SK-N-SH (cell line): ENCODE measurements at regions of chr1 and their contacts with region 1.

Region 1: DNA sequence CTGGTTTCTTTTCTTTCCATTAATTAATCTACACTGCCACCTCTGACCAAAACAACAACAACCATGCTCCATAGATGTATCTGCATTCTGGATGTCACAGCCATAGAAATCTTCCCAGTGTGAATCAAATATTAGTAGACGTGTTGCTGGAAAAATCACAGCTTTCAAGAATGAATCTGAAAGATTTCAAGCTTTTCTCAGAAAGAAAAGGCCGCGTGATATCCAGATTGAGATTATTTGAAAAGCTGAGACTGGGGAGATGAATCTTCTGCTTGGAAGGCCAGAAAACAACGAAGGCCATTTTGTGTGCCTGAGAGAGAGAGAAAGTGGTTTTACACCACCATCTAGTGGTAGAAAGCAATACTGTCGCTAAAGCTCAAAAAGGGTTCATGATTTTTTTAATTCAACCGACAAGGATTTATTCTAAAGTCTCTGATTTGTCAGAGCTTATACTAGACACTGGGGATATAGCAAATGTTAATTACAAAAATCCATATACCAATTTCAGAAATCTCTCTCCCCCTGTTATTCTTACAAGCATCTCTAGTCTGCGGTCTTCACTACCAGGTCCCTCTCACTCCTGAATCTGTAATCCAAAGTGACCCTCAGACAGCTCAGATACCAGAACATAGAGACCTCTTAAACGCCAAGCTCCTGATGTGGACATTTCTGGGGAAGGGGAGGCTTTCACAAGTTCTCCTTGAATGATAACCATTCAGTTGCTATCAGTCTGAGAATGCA is 87.5 kb upstream of the SGIP1 start:
- DNase-seq: peak; percentile 64
- H3K4me3 ChIP-seq: no peak overlapping the region; a peak in 1 of 4 replicates
- H3K27ac ChIP-seq: peak overlapping the region; percentile 21 to 99; a peak in 3 of 4 replicates
- H3K4me1 ChIP-seq: peaks cover 17 to 36% of the 10 kb centered on the region in 2 experiments; a peak in 3 of 4 replicates
- H3K27me3 ChIP-seq: no peaks in the 10 kb centered on the region
- CTCF ChIP-seq: peak; percentile 86
- EP300 ChIP-seq: no peak
- RAD21 ChIP-seq: peak; percentile 98

Region 2: DNA sequence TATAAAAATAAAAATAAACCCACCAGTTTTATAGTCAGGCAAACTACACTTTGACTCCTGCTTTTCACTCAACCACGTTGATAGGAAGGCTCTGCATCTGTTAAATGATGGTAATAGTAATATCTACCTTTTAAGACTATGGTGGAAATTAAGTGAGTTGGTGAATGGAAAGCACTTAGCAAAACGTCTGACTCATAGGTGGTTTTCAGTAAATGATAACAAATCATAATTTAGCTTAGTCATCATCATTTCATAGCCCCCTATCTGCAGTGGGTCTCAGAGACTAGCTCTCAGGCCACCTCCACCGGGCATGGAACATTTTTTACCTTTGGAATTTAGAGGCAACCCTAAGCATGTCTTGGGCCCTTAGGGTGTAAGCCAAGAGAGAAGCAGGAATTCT is 493.7 kb before region 1 on chr1:
- CTCF ChIA-PET with region 1: interaction called, 40 read pairs
- POLR2A ChIA-PET with region 1: no interaction called
- DNase-seq: no peak
- H3K4me3 ChIP-seq: no peak overlapping the region
- H3K27ac ChIP-seq: no peak overlapping the region
- H3K4me1 ChIP-seq: no peaks in the 10 kb centered on the region
- H3K27me3 ChIP-seq: no peaks in the 10 kb centered on the region
- CTCF ChIP-seq: no peak
- EP300 ChIP-seq: no peak
- RAD21 ChIP-seq: no peak

Region 3: DNA sequence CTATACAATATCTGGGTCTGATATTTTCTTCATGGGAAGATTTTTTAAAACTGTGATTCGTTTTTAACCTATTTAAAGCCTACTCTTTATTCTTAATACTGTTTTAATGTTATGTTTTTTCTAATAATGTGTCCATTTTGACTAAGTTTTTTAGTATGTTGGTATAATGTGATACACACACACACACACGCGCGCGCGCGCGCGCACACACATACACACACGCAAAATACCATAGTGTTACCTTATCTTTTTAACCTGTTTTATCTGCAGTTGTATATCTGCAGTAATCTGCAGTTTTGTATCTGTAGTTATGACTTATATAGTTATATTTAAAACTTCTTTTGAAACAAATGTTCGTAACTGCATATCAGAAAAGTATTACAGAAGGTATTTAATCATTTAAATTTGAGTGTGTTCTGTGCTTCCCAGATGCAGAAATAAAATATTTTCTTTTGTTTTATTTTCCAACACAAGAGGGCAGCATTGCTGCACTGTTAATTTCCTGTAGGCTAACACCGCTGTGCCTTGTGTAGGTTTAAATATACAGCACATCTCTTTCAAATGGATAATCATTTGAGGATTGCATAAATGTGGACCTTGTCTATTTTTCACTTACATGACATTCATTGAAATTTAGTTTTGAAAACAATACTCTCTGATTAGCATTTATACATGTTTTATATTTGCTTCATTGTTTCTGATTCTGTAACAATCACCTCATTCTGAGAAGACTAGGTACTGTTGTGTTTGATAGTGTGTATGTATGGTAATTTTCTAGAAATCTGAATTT is 487.7 kb before region 1 on chr1:
- CTCF ChIA-PET with region 1: interaction called, 40 read pairs
- POLR2A ChIA-PET with region 1: no interaction called
- DNase-seq: peak; percentile 46
- H3K4me3 ChIP-seq: no peak overlapping the region
- H3K27ac ChIP-seq: no peak overlapping the region; a peak in 1 of 4 replicates
- H3K4me1 ChIP-seq: peaks cover 0 to 8% of the 10 kb centered on the region in 2 experiments; a peak in 1 of 4 replicates
- H3K27me3 ChIP-seq: no peaks in the 10 kb centered on the region
- CTCF ChIP-seq: peak; percentile 82
- EP300 ChIP-seq: no peak
- RAD21 ChIP-seq: peak; percentile 98

Region 4: GRCh38 chr1:66271216-66271903 is 175.1 kb before region 1 on chr1:
- CTCF ChIA-PET with region 1: interaction called, 12 read pairs
- POLR2A ChIA-PET with region 1: no interaction called
- DNase-seq: peak; percentile 72
- H3K4me3 ChIP-seq: peak overlapping the region in 1 of 2 experiments; percentile 30; a peak in 1 of 4 replicates
- H3K27ac ChIP-seq: peak overlapping the region; percentile 91 to 97
- H3K4me1 ChIP-seq: peaks cover 21 to 45% of the 10 kb centered on the region in 2 experiments; a peak in 3 of 4 replicates
- H3K27me3 ChIP-seq: no peaks in the 10 kb centered on the region
- CTCF ChIP-seq: no peak
- EP300 ChIP-seq: peak; percentile 96
- RAD21 ChIP-seq: peak; percentile 38

Region 5: DNA sequence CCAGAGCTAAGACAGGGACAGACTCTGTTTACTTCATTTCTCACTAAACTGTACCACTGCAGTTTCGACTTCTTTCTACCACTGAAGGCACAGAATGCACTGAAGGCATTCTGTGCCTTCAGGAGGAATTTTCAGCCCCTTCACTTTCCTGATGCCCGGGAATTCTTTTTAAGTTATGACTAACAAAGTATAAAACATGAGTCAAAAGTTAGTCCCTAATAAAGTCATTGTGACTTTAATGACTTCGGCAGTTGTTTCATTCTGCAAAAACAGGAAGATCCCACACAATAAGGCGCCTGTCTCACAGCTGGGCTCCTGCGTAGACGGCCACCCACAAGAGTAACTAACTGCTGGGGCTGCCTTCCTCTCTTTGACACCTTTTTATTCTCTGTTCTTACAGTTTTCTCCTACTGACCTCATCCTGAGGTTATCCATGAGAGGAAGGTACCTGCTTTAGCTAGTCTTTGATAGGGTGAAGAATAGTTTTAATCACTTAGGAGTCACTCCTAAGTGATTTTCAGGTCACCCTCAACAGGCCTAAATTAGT is 96.4 kb before region 1 on chr1:
- CTCF ChIA-PET with region 1: interaction called, 25 read pairs
- POLR2A ChIA-PET with region 1: no interaction called
- DNase-seq: no peak
- H3K4me3 ChIP-seq: peak overlapping the region in 1 of 2 experiments; percentile 20; a peak in 1 of 4 replicates
- H3K27ac ChIP-seq: peak overlapping the region in 1 of 2 experiments; percentile 33; a peak in 1 of 4 replicates
- H3K4me1 ChIP-seq: peaks cover 24 to 43% of the 10 kb centered on the region in 2 experiments; a peak in 3 of 4 replicates
- H3K27me3 ChIP-seq: no peaks in the 10 kb centered on the region
- CTCF ChIP-seq: no peak
- EP300 ChIP-seq: no peak
- RAD21 ChIP-seq: no peak

Region 6: GRCh38 chr1:66490816-66491215 is 44.4 kb after region 1 on chr1:
- CTCF ChIA-PET with region 1: interaction called, 19 read pairs
- POLR2A ChIA-PET with region 1: interaction called, 28 read pairs
- DNase-seq: peak; percentile 39
- H3K4me3 ChIP-seq: peak overlapping the region in 1 of 2 experiments; percentile 33; a peak in 2 of 4 replicates
- H3K27ac ChIP-seq: peak overlapping the region; percentile 95 to 100
- H3K4me1 ChIP-seq: peaks cover 46 to 71% of the 10 kb centered on the region in 2 experiments
- H3K27me3 ChIP-seq: no peaks in the 10 kb centered on the region
- CTCF ChIP-seq: no peak
- EP300 ChIP-seq: peak; percentile 77 to 98
- RAD21 ChIP-seq: peak; percentile 32

Region 7: GRCh38 chr1:66725885-66726665 is 279.6 kb after region 1 on chr1:
- CTCF ChIA-PET with region 1: interaction called, 29 read pairs
- POLR2A ChIA-PET with region 1: no interaction called
- DNase-seq: peak; percentile 45
- H3K4me3 ChIP-seq: peak overlapping the region in 1 of 2 experiments; percentile 14; a peak in 1 of 4 replicates
- H3K27ac ChIP-seq: peak overlapping the region in 1 of 2 experiments; percentile 48; a peak in 2 of 4 replicates
- H3K4me1 ChIP-seq: peaks cover 5 to 14% of the 10 kb centered on the region in 2 experiments; a peak in 2 of 4 replicates
- H3K27me3 ChIP-seq: no peaks in the 10 kb centered on the region
- CTCF ChIP-seq: peak; percentile 98
- EP300 ChIP-seq: no peak
- RAD21 ChIP-seq: peak; percentile 88